Activated naive CD4-positive, alpha-beta T cell treated with anti-CD3 and anti-CD28 coated beads, Interleukin-2, amount 10 ng/mL, durations not matched to agents 7 days and 5 days (primary cell): ENCODE measurements at regions of chr7 and their contacts with region 1.

Region 1: DNA sequence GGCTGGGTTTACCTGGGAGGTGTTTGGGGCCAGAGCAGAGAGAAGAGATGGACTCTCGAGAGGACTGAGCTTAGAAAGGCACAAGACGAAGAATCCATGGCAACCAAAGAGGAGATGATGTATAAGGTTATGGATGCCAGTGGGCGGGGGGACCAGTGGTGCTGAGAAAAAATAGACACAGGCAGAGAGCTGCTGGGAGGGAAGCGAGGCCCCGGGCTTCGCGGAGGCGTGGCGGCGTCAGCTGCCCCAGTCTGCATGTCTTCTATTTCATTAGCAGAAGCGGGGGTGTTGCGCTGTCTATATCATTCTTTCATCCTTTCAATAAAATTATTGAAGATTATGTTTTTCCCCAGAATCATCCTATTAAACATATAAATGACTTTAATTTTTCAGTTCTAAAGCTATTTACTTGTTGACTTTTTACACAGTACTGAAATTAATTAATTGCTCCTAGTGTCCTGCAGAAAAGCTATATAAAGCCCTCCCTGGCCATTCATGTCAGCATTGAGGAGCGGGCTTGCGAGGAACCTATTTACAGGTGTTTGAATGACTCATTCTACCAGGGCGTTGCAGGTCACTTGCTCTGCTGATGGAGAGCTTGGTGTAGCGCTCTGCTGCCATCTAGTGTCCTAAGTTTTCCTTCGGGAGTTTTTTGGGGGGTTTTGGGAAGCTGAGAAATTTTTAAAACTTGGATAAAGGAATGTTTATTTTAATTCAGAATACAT is 42.9 kb upstream of the BHLHA15 start:
- DNase-seq: peak; percentile 76
- H3K4me3 Mint-ChIP-seq: no peak overlapping the region
- H3K27ac Mint-ChIP-seq: no peak overlapping the region
- H3K4me1 Mint-ChIP-seq: peaks cover 13% of the 10 kb centered on the region
- H3K27me3 Mint-ChIP-seq: no peaks in the 10 kb centered on the region

Region 2: GRCh38 chr7:98014352-98014751 is 154.0 kb before region 1 on chr7:
- CTCF ChIA-PET with region 1: interaction called, 301 read pairs
- DNase-seq: no peak
- H3K4me3 Mint-ChIP-seq: no peak overlapping the region
- H3K27ac Mint-ChIP-seq: no peak overlapping the region
- H3K4me1 Mint-ChIP-seq: no peaks in the 10 kb centered on the region
- H3K27me3 Mint-ChIP-seq: peaks cover 4% of the 10 kb centered on the region

Region 3: GRCh38 chr7:98021588-98022351 is 146.6 kb before region 1 on chr7:
- CTCF ChIA-PET with region 1: interaction called, 301 read pairs
- DNase-seq: peak; percentile 84
- H3K4me3 Mint-ChIP-seq: no peak overlapping the region
- H3K27ac Mint-ChIP-seq: no peak overlapping the region
- H3K4me1 Mint-ChIP-seq: peaks cover 5% of the 10 kb centered on the region
- H3K27me3 Mint-ChIP-seq: peaks cover 8% of the 10 kb centered on the region

Region 4: GRCh38 chr7:98106647-98107445 is 61.5 kb before region 1 on chr7 and contains the start of gene LMTK2:
- CTCF ChIA-PET with region 1: interaction called, 74 read pairs
- DNase-seq: peak; percentile 96
- H3K4me3 Mint-ChIP-seq: peak within 1 kb of the TSS; percentile 97
- H3K27ac Mint-ChIP-seq: peak within 1 kb of the TSS; percentile 90
- H3K4me1 Mint-ChIP-seq: peaks cover 25% of the 10 kb centered on the region
- H3K27me3 Mint-ChIP-seq: peaks cover 20% of the 10 kb centered on the region

Region 5: DNA sequence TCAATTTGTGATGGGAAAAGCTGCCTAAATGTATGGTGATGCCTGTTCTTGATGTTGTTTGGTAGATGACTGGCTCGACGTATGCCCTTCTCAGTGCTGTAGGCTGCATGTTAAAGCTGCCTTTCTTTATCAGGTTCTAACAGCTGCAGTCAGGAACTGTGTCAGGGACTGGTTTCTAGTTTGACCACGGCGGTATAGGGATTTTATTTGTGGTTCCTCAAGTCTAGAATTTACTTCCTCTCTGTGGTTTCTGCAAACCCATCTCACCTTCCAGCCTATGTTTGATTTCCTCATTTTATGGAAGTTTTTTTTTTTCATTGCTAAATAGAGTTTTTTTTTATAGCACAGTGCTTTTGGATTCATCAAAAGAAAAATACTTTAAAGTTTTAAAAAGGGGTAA is 35.2 kb before region 1 on chr7:
- CTCF ChIA-PET with region 1: interaction called, 13 read pairs
- DNase-seq: peak; percentile 28
- H3K4me3 Mint-ChIP-seq: peak overlapping the region; percentile 13
- H3K27ac Mint-ChIP-seq: no peak overlapping the region
- H3K4me1 Mint-ChIP-seq: peaks cover 42% of the 10 kb centered on the region
- H3K27me3 Mint-ChIP-seq: peaks cover 25% of the 10 kb centered on the region